ENCODE measurements at regions of chr9 and their contacts with region 1.

Region 1: DNA sequence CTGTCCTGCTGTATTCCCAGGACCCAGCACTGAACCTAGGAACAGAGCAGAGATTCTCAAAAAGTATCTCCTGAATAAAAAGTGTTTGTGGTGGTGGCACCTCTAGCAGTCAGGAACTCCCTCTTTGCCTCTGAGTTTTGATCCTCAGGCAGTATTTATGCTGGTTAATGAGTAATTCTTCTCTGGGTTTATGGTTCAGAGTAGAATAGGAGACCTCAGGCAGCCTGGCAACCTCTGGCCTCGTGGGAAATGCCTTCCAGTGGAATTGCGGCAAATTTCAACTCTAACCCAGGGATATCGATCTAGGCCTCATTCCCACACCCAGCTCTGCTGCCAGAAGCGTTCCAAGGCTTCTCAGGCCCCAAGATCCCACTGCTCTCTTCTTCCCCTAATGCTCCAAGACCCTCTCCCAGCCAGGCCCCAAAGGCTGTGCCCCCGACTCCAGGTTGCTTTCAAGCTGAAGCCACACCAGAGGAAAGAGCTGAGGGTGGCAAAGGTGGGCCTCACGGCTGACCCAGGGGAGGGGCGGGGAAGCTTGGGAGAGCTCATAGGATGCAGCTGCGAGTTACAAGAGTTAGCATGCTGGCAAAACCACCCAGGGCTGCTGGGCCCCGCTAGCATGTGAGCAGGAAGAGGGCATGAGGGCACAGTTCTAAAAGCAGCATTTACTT is 10.9 kb upstream of the HDHD3 start:
- DNase-seq: no peak
- H3K4me3 Mint-ChIP-seq: peak overlapping the region; percentile 24
- H3K27ac Mint-ChIP-seq: peak overlapping the region; percentile 66
- H3K4me1 Mint-ChIP-seq: peaks cover 30% of the 10 kb centered on the region
- H3K27me3 Mint-ChIP-seq: no peaks in the 10 kb centered on the region
- CTCF ChIP-seq: no peak

Region 2: DNA sequence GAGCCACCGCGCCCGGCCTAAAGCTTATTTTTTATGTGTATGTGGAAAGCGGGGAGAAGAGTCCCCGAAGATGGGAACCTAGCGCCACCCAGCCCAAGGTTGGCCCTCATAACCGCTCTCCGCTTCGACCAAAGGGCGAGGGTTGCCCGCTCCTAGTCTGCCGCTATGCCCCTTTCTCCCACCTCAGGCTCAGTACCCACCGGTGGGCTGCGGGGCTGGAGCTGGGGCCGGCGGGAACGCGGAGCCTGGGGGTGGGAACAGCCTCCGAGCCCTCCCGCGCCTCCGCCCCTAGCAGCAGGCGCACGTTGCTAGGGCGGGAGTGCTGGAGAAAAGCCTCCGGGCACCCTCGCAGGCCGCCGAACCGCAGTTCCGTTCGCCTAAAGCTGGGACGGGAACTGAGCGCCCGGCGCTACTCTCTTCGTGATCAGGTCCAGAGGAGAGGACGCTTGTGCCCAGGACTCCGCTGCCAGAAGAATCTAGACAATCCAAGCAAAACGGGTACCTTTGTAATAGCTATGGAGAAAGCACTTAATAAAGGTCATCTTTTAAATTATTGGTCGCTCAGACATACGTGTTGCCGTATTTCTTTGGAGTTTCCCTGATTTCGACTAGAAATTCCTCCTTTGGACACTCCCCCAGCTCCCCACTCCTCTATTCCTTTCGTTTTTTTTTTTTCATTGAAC is 47.5 kb before region 1 on chr9 and contains the start of gene WDR31:
- CTCF ChIA-PET with region 1: no interaction called
- intact Hi-C with region 1: loop called (anchors 5 kb)
- DNase-seq: peak; percentile 88
- H3K4me3 Mint-ChIP-seq: peak within 1 kb of the TSS; percentile 76
- H3K27ac Mint-ChIP-seq: peak within 1 kb of the TSS; percentile 76
- H3K4me1 Mint-ChIP-seq: peaks cover 39% of the 10 kb centered on the region
- H3K27me3 Mint-ChIP-seq: no peaks in the 10 kb centered on the region
- CTCF ChIP-seq: no peak
- total RNA-seq, gene WDR31: 3.1 and 4.0 TPM in 2 replicates

Region 3: DNA sequence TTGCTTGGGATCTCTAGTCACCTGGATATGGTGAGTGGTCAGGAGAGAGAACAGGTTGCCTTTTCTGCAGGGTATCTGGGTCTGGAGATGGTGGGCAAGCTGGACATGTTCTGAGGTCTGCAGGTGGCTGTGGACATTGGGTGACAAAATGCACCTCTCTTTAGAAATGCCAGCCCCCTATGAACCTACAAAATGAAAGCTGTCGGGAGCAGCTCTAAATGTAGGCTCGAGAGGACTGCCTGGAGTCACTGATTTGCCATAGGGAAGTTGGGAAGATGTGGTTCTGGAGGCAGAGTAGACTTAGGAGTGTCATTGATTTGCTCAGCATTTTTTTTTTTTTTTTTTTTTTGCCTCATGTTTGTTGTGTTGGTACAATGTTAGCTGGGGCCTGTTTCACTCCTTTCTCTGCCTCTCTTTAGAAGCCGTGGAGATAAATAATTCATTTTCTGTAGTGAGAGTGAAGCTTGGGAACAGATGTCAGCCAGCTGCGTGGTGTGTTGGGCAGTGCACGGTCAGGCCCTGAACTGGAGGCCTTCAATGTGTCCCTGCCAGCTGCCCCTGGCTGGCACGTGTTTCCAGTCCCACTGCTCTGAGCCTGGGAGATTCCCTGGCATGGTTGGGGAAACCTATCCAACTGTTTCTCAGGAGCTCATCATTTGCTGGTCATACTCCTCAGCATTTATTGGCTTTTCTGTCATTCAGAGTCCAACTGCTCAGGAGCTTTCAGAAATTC is 81.2 kb after region 1 on chr9:
- CTCF ChIA-PET with region 1: no interaction called
- intact Hi-C with region 1: no loop called
- DNase-seq: no peak
- H3K4me3 Mint-ChIP-seq: no peak overlapping the region
- H3K27ac Mint-ChIP-seq: no peak overlapping the region
- H3K4me1 Mint-ChIP-seq: peaks cover 44% of the 10 kb centered on the region
- H3K27me3 Mint-ChIP-seq: no peaks in the 10 kb centered on the region
- CTCF ChIP-seq: no peak

Measured in Calu3 (cell line).